ENCODE measurements at regions of chr2 and their contacts with region 1.

Region 1: DNA sequence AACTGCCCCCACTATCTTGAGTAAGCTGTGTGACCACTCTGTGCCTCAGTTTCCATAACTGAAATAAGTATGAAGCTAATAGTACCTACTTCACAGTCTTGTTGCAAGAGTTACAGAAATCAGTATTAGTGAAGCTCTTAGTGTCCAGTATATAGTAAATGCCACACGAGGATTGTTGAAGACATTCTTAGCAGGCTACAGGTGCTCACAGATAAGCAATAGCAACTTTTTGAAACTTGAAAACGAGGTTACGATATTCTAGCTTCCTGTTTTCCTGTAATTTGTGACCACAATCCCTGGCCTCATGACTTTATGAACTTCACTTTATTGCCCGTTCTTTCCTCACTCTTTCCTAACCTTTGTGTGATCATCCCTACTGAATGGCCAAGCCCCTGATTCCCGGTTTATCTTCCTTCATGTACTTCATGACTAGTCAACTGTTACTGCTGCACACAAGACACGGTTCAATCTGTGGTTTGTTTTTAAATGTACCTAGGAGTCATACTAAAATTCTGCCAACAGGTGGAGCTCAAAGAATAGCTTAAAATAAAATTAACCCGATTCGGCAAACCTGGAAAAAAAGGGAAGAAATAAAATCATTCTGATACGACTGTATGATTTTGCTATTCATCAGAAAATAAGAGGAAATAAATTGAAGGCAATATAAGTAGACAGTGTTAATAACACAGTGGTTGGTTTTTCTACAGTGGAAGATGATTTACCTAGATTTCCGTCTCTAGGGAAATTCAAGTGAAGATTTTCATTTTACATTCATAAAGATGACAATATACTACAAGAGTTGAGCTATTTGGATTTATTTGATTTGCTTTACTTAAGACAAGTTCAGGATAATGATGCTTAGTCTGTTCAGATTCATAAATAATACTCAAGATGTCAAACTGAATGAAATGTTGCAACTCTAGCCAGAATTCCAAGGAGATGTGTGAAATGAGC is 38.1 kb upstream of the STAT1 start:
- DNase-seq: peak; percentile 48
- H3K27ac ChIP-seq: no peak overlapping the region
- CTCF ChIP-seq: peak; percentile 72

Region 2: GRCh38 chr2:191155608-191156071 is 103.5 kb after region 1 on chr2:
- CTCF ChIA-PET with region 1: interaction called, 44 read pairs
- POLR2A ChIA-PET with region 1: no interaction called
- DNase-seq: peak; percentile 58
- H3K27ac ChIP-seq: no peak overlapping the region
- CTCF ChIP-seq: peak; percentile 66

Region 3: GRCh38 chr2:191421950-191422349 is 369.8 kb after region 1 on chr2:
- CTCF ChIA-PET with region 1: no interaction called
- POLR2A ChIA-PET with region 1: no interaction called
- DNase-seq: no peak
- H3K27ac ChIP-seq: no peak overlapping the region
- CTCF ChIP-seq: no peak

Measured in RWPE1 (cell line).